Head of caudate nucleus (tissue), 42 donors: ENCODE measurements at regions of chr21 and their contacts with region 1.

Region 1: GRCh38 chr21:44510508-44511210 is 29.3 kb downstream of the KRTAP10-1 start:
- DNase-seq: peak in 41 of 42 donors; percentile 14 to 81 (median 58)

Region 2: DNA sequence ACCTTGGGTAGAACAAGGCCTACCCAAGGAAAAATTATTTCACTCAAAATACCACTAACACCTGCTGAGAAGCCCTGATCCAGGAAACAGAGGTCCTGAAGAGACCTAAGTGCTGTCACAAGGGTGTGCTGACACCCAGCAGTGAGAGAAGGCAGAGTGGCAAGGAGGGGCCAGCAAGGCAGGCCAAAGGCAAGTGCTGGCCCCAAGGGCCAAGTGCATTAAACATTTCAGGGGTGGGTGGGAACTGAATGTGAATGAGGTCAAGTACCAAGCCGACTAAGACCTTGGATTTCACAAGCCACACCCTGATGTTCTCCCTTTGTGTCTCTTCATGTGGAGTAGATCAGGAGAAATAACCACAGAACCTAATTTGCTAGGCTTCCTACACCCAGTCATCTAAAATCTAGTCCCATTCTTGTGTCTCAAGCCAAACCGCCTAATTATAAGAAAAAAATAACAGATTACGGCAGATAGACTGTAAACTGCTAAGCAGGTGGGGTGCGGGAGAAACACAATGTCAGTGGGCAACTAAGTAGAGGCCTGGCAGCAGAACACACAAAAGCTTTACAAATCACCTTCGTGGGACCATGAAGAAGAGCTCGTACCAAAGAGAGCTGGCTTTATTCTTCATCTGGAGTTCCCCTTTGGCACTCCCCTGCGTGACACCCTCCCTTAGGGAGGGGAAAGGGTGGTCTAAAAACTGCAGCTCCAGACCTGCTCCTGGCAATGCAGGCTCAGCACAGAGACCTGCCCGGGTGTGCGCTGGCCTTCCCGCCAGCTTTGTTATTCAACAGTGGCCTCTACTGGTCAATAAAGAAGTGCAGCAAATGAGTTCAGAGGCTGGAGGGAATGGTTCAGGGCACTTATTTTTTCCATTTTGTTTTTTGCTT is 282.3 kb after region 1 on chr21:
- intact Hi-C with region 1: loop called (anchors 10 kb)
- DNase-seq: peak in 32 of 42 donors; percentile 35 to 79 (median 56)